Calu3 (cell line): ENCODE measurements at regions of chr6 and their contacts with region 1.

Region 1: GRCh38 chr6:158387036-158387435 is 74.8 kb downstream of the TULP4 start:
- DNase-seq: no peak
- H3K4me3 Mint-ChIP-seq: no peak overlapping the region
- H3K27ac Mint-ChIP-seq: no peak overlapping the region
- H3K4me1 Mint-ChIP-seq: no peaks in the 10 kb centered on the region
- H3K27me3 Mint-ChIP-seq: no peaks in the 10 kb centered on the region
- CTCF ChIP-seq: no peak

Region 2: DNA sequence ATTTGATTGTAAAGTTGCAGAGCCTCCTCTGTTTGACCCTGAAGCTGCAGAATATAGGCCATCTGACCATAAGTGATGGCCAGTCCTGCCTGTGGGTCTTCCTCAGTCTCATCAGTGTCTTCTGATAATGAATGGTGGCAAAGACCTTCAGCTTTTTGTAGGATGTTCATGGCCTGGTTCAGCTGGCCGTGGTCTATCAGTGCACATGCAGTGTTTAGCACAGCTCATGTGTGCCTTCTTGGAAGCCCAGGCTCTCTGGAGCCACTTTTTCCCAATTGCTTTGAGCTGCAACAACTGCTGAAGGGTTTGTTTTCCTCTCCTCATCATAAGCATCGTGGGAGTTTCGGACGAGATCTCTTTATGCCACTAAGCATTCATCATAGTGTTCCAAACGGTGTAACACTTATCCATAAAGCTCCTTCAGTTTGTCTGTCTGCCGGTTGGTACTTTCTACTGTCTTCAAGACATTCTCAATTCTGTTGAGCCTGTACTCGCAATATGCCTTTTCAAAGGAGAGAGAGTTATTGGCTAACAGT is 144.9 kb before region 1 on chr6:
- CTCF ChIA-PET with region 1: no interaction called
- intact Hi-C with region 1: loop called (anchors 10 kb)
- DNase-seq: no peak
- H3K4me3 Mint-ChIP-seq: peak overlapping the region; percentile 14
- H3K27ac Mint-ChIP-seq: peak overlapping the region; percentile 78
- H3K4me1 Mint-ChIP-seq: peaks cover 45% of the 10 kb centered on the region
- H3K27me3 Mint-ChIP-seq: no peaks in the 10 kb centered on the region
- CTCF ChIP-seq: no peak

Region 3: GRCh38 chr6:158559895-158560835 is 173.1 kb after region 1 on chr6 and contains the start of gene TMEM181:
- CTCF ChIA-PET with region 1: no interaction called
- intact Hi-C with region 1: no loop called
- DNase-seq: peak; percentile 86
- H3K4me3 Mint-ChIP-seq: peak within 1 kb of the TSS; percentile 85
- H3K27ac Mint-ChIP-seq: peak within 1 kb of the TSS; percentile 95
- H3K4me1 Mint-ChIP-seq: peaks cover 21% of the 10 kb centered on the region
- H3K27me3 Mint-ChIP-seq: no peaks in the 10 kb centered on the region
- CTCF ChIP-seq: no peak
- total RNA-seq, gene TMEM181: 42.9 and 48.7 TPM in 2 replicates